GM13976 (cell line): ENCODE measurements at regions of chrX and their contacts with region 1.

Region 1: GRCh38 chrX:27186664-27187063 is 276.5 kb downstream of the PPP4R3C start:
- DNase-seq: peak; percentile 32
- CTCF ChIP-seq: peak; percentile 75

Region 2: GRCh38 chrX:26783512-26784225 is 403.0 kb before region 1 on chrX:
- in situ Hi-C with region 1: loop called (anchors 25 kb)
- DNase-seq: no peak
- CTCF ChIP-seq: peak; percentile 53

Region 3: DNA sequence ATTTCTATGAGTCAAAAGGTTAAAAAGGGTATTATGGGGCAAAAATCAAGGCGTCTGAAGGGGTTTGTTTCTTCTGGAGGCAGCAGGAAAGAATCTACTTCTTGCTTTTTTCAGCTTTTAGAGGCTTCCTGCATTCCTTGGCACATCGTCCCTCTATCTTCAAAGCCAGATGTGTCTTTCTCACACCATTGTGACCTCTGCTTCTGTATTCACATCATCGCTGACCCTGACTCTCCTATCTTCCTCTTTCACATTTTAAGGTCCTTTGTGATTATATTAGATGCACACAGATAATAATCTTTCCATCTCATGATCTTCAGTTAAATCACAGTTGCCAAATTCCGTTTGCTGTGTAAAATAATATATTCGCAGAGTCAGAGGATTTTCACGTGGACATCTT is 163.8 kb after region 1 on chrX:
- in situ Hi-C with region 1: no loop called
- DNase-seq: no peak
- CTCF ChIP-seq: no peak

Region 4: DNA sequence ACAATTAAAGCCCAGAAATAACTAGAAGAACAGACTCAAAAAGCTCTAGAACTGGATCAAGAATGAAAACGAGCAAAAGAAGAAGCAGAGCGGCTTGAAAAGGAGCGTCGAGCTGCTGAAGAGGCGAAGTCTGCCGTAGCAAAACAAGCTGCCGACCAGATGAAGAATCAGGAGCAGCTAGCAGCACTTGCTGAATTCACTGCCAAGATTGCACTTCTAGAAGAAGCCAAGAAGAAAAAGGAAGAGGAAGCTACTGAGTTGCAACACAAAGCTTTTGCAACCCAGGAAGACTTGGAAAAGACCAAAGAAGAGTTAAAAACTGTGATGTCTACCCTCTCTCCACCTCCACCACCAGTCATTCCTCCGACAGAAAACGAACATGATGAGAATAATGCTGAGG is 332.6 kb after region 1 on chrX:
- in situ Hi-C with region 1: no loop called
- DNase-seq: no peak
- CTCF ChIP-seq: no peak

Region 5: GRCh38 chrX:27715610-27716009 is 528.9 kb after region 1 on chrX:
- in situ Hi-C with region 1: no loop called
- DNase-seq: no peak
- CTCF ChIP-seq: no peak

Region 6: GRCh38 chrX:27987862-27988646 is 801.4 kb after region 1 on chrX:
- in situ Hi-C with region 1: no loop called
- DNase-seq: no peak
- CTCF ChIP-seq: no peak